Ovary (tissue), 10 donors: ENCODE measurements at regions of chr2 and their contacts with region 1.

Region 1: DNA sequence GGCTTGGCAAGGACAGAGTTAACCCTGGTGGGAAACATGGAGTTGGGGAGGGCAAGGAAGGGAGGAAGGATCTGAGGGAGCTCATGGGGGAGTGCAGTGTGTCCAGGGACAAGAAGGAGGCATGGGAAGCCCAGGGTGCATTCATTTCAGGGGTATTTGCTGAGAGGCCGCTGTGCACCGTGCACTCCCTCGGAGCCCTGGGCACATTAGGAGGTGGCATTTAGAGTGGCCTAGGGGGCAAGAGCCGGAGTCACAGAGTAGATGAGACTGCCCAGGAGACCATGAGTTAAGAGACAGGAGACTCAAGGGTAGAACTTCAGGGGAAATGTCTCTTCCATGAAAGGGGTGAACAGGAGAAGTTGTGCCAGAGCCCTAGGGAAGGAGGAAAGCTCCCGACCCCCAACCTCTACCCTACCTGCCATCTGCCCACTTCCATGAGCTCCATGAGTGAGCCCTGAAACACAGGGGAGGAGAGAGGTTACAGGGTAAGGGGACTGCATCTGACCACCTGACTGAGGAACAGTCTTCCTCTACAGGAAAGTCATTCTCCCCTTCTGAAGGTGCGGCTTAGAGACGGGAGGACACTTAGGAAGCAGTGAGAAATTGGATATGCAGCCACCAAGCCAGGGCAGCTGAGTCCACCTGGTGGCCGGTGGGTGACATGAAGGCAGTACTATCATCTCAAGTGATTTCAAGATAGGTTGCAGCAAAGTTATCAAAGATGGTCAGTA is 58.5 kb upstream of the COPS8 start:
- DNase-seq: peak; percentile 27 to 70 (median 58)
- H3K4me3 ChIP-seq: no peak overlapping the region
- H3K27ac ChIP-seq: no peak overlapping the region
- H3K4me1 ChIP-seq: no peaks in the 10 kb centered on the region
- H3K27me3 ChIP-seq: no peaks in the 10 kb centered on the region
- CTCF ChIP-seq: peak; percentile 34 to 45 (median 43)
- EP300 ChIP-seq: no peak
- POLR2A ChIP-seq: no peak

Region 2: DNA sequence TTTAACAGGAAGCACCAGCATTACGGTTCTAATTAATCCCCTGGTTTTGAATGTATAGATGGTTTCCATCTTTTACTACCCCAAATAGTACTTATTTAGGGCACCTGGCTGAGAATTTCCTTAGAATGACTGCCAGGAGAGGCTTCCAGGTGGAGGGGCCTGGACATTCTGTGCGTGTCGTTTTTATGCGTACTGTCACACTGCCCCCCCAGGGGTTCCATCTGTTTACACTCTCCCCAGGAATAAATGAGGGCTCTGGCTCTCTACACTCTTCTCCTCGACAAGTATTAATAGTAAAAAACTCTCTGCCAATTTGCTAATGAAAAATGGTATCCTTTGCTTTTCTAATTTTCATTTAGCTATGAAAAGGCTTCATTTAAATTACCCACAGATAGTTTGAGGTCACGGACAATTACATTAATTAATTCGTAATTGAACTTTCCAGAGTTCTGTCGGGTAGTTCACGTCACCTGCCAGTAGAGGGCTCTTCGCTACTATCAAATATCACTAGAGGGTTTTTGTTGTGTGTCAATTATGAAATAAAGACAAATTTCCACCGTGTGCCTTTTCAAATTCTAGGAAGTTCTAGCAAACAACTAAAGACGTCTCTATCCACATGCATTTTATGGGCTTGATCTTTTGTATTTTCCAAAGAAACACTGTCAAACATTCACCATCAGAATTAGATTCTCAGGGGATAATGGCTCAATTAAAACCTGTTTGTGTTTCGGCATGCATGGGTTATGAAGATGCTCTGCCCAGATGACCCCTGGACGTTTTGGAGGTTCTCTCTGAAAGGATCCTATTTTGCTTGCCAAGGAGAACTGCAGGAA is 674.2 kb before region 1 on chr2:
- intact Hi-C with region 1: loop called in 1 of 4 experiments (anchors 10 kb)
- DNase-seq: peak in 1 of 5 donors; percentile 36
- H3K4me3 ChIP-seq: no peak overlapping the region
- H3K27ac ChIP-seq: no peak overlapping the region
- H3K4me1 ChIP-seq: no peaks in the 10 kb centered on the region
- H3K27me3 ChIP-seq: no peaks in the 10 kb centered on the region
- CTCF ChIP-seq: peak; percentile 55 to 73 (median 65)
- EP300 ChIP-seq: no peak
- POLR2A ChIP-seq: no peak

Region 3: GRCh38 chr2:236512902-236513435 is 514.2 kb before region 1 on chr2:
- intact Hi-C with region 1: loop called in 1 of 4 experiments (anchors 5 kb)
- DNase-seq: peak; percentile 32 to 71 (median 56)
- H3K4me3 ChIP-seq: no peak overlapping the region
- H3K27ac ChIP-seq: no peak overlapping the region
- H3K4me1 ChIP-seq: no peaks in the 10 kb centered on the region
- H3K27me3 ChIP-seq: no peaks in the 10 kb centered on the region
- CTCF ChIP-seq: peak; percentile 45 to 64 (median 51)
- EP300 ChIP-seq: no peak
- POLR2A ChIP-seq: no peak

Region 4: GRCh38 chr2:236705295-236706114 is 321.6 kb before region 1 on chr2:
- intact Hi-C with region 1: no loop called
- DNase-seq: no peak
- H3K4me3 ChIP-seq: no peak overlapping the region
- H3K27ac ChIP-seq: no peak overlapping the region
- H3K4me1 ChIP-seq: no peaks in the 10 kb centered on the region
- H3K27me3 ChIP-seq: no peaks in the 10 kb centered on the region
- CTCF ChIP-seq: no peak
- EP300 ChIP-seq: no peak
- POLR2A ChIP-seq: no peak

Region 5: GRCh38 chr2:236972491-236973342 is 54.4 kb before region 1 on chr2:
- intact Hi-C with region 1: no loop called
- DNase-seq: no peak
- H3K4me3 ChIP-seq: no peak overlapping the region
- H3K27ac ChIP-seq: no peak overlapping the region
- H3K4me1 ChIP-seq: no peaks in the 10 kb centered on the region
- H3K27me3 ChIP-seq: no peaks in the 10 kb centered on the region
- CTCF ChIP-seq: no peak
- EP300 ChIP-seq: no peak
- POLR2A ChIP-seq: no peak

Region 6: DNA sequence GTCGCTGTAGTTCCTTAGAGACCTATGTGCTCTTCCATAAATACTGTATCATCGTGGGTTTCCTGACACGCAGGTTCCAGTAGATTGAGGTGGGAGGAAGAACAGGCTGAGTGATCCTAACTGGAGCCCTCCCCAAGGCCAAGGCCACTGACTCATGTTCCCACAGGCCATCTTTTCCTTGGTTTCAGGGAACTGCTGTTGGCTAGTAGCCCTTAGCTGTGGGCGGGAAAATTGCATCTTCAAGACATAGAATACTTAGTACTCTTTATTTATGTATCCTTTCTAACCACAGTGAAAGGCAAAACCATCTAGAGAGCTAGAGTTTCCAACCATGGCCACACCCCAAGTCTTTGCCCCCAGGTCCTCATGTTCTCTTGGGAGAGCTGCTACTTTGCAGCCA is 114.4 kb after region 1 on chr2:
- intact Hi-C with region 1: no loop called
- DNase-seq: peak in 1 of 5 donors; percentile 52
- H3K4me3 ChIP-seq: no peak overlapping the region
- H3K27ac ChIP-seq: no peak overlapping the region
- H3K4me1 ChIP-seq: no peaks in the 10 kb centered on the region
- H3K27me3 ChIP-seq: no peaks in the 10 kb centered on the region
- CTCF ChIP-seq: no peak
- EP300 ChIP-seq: no peak
- POLR2A ChIP-seq: no peak